ENCODE measurements at regions of chr4 and their contacts with region 1.

Region 1: DNA sequence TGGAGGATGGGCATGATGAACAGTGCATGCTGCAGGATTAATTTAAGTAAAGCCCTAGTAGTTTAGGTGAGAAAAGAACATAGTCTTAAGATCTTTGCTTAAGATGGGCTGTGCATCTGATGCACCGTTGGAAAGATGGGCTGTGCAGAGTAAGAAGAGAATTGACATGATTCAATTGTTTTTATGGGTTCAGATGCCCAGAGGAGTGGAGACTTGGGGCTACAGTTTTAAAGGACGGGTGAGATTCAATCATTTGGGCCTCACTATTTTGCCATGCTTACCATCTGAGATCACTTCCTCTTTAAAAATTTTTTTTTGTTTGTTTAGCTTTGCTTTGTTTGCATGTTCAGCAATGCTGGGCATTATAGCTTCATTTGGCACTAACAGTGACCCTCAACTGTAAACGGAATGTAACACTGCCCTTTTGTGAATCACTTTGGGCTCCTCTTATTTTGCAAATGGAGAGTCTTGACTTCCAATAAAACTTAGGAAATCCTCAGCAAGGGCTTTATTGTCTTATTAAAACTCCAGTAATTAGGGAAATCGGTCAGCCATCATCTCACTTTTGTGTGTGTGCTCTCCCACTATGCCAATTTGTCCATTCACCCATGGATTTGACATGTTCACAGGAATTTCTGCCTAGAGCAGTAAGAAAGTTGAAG is 216.1 kb upstream of the TLL1 start:
- DNase-seq: peak; percentile 77
- ATAC-seq: peak; percentile 88
- H3K4me3 ChIP-seq: no peak overlapping the region
- H3K27ac ChIP-seq: peak overlapping the region; percentile 78
- H3K4me1 ChIP-seq: peaks cover 16% of the 10 kb centered on the region
- H3K27me3 ChIP-seq: no peaks in the 10 kb centered on the region
- CTCF ChIP-seq: no peak

Region 2: GRCh38 chr4:164326056-164326455 is 1330.9 kb before region 1 on chr4:
- CTCF ChIA-PET with region 1: no interaction called
- POLR2A ChIA-PET with region 1: interaction called, 10 read pairs
- intact Hi-C with region 1: no loop called
- DNase-seq: no peak
- ATAC-seq: no peak
- H3K4me3 ChIP-seq: no peak overlapping the region
- H3K27ac ChIP-seq: no peak overlapping the region
- H3K4me1 ChIP-seq: no peaks in the 10 kb centered on the region
- H3K27me3 ChIP-seq: no peaks in the 10 kb centered on the region
- CTCF ChIP-seq: no peak

Region 3: GRCh38 chr4:165684177-165684805 is 27.3 kb after region 1 on chr4:
- CTCF ChIA-PET with region 1: no interaction called
- POLR2A ChIA-PET with region 1: no interaction called
- intact Hi-C with region 1: loop called (anchors 1 kb)
- DNase-seq: peak; percentile 90
- ATAC-seq: peak; percentile 67
- H3K4me3 ChIP-seq: peak overlapping the region; percentile 36; the same call in 1 of the 2 replicates
- H3K27ac ChIP-seq: peak overlapping the region; percentile 71
- H3K4me1 ChIP-seq: peaks cover 64% of the 10 kb centered on the region
- H3K27me3 ChIP-seq: no peaks in the 10 kb centered on the region
- CTCF ChIP-seq: no peak

Region 4: GRCh38 chr4:165709973-165710526 is 53.1 kb after region 1 on chr4:
- CTCF ChIA-PET with region 1: no interaction called
- POLR2A ChIA-PET with region 1: no interaction called
- intact Hi-C with region 1: no loop called
- DNase-seq: peak; percentile 54
- ATAC-seq: peak; percentile 80
- H3K4me3 ChIP-seq: no peak overlapping the region
- H3K27ac ChIP-seq: no peak overlapping the region
- H3K4me1 ChIP-seq: peaks cover 11% of the 10 kb centered on the region
- H3K27me3 ChIP-seq: no peaks in the 10 kb centered on the region
- CTCF ChIP-seq: no peak

Region 5: GRCh38 chr4:166078955-166079354 is 422.0 kb after region 1 on chr4:
- CTCF ChIA-PET with region 1: no interaction called
- POLR2A ChIA-PET with region 1: no interaction called
- intact Hi-C with region 1: loop called (anchors 10 kb)
- DNase-seq: peak; percentile 46
- ATAC-seq: no peak
- H3K4me3 ChIP-seq: no peak overlapping the region
- H3K27ac ChIP-seq: no peak overlapping the region
- H3K4me1 ChIP-seq: peaks cover 34% of the 10 kb centered on the region
- H3K27me3 ChIP-seq: no peaks in the 10 kb centered on the region
- CTCF ChIP-seq: no peak

Measured in PC-3 (cell line).